B cell (primary cell): ENCODE measurements at regions of chr2 and their contacts with region 1.

Region 1: DNA sequence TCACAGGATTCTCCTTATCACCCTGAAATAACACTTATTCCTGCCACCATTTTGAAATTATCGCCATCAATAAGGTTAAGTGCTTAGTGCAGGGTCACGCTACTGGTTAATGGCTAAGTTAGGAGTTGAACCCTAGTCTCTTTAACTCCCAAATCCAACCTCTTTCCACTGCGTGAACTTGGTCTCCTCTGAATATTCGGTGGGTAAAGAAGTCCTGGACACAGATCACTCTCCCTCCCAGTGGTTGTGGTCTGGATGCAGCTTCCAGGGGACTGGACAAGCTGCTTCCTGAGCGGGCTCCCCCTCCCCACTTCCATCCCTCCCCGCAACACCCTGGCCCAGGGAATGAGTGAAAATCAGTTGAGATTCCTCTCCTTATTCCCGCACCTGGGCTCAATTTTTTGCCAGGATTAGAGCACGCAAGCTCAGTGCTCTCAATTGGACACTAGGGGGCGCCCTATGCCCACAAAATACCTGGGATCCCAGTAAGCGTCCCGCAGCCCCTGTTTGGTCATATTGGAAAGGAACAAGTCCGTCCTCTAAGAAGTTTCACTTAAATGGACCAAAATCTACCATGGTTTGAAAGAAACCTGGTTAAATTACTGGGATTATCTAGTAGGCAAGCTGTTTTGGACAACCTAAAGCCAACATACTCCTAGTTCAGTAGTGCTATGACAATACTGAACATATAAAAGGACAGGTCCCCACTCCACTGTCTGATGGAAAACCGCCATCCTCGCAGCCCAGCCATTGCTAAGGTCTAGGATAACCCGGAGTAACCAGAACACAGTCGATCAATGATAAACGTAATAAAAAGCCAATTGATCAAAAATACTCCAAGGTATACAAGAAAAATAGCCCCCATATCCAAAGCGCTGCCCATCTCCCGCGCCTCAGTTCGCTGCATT is 40.4 kb downstream of the DHRS9 start:
- DNase-seq: peak; percentile 68
- ATAC-seq: peak; percentile 28
- H3K4me3 ChIP-seq: no peak overlapping the region
- H3K4me3 Mint-ChIP-seq: no peak overlapping the region
- H3K27ac ChIP-seq: no peak overlapping the region
- H3K27ac Mint-ChIP-seq: no peak overlapping the region
- H3K4me1 ChIP-seq: peaks cover 20 to 30% of the 10 kb centered on the region in 2 donors
- H3K4me1 Mint-ChIP-seq: peaks cover 31% of the 10 kb centered on the region
- H3K27me3 ChIP-seq: peaks cover 0 to 13% (median 0%) of the 10 kb centered on the region in 4 experiments
- H3K27me3 Mint-ChIP-seq: no peaks in the 10 kb centered on the region
- CTCF ChIP-seq: peak; percentile 77

Region 2: GRCh38 chr2:169095621-169096105 is 14.1 kb before region 1 on chr2:
- CTCF ChIA-PET with region 1: interaction called, 38 read pairs
- POLR2A ChIA-PET with region 1: no interaction called
- intact Hi-C with region 1: no loop called
- DNase-seq: no peak
- ATAC-seq: no peak
- H3K4me3 ChIP-seq: no peak overlapping the region
- H3K4me3 Mint-ChIP-seq: no peak overlapping the region
- H3K27ac ChIP-seq: no peak overlapping the region
- H3K27ac Mint-ChIP-seq: no peak overlapping the region
- H3K4me1 ChIP-seq: peaks cover 18 to 19% of the 10 kb centered on the region in 2 donors
- H3K4me1 Mint-ChIP-seq: peaks cover 28% of the 10 kb centered on the region
- H3K27me3 ChIP-seq: no peaks in the 10 kb centered on the region
- H3K27me3 Mint-ChIP-seq: no peaks in the 10 kb centered on the region
- CTCF ChIP-seq: no peak

Region 3: GRCh38 chr2:169131587-169132512 is 22.1 kb after region 1 on chr2:
- CTCF ChIA-PET with region 1: interaction called, 45 read pairs
- POLR2A ChIA-PET with region 1: no interaction called
- intact Hi-C with region 1: no loop called
- DNase-seq: peak; percentile 63
- ATAC-seq: peak; percentile 81
- H3K4me3 ChIP-seq: no peak overlapping the region
- H3K4me3 Mint-ChIP-seq: no peak overlapping the region
- H3K27ac ChIP-seq: no peak overlapping the region
- H3K27ac Mint-ChIP-seq: no peak overlapping the region
- H3K4me1 ChIP-seq: no peaks in the 10 kb centered on the region
- H3K4me1 Mint-ChIP-seq: peaks cover 1% of the 10 kb centered on the region
- H3K27me3 ChIP-seq: no peaks in the 10 kb centered on the region
- H3K27me3 Mint-ChIP-seq: no peaks in the 10 kb centered on the region
- CTCF ChIP-seq: peak; percentile 98

Region 4: DNA sequence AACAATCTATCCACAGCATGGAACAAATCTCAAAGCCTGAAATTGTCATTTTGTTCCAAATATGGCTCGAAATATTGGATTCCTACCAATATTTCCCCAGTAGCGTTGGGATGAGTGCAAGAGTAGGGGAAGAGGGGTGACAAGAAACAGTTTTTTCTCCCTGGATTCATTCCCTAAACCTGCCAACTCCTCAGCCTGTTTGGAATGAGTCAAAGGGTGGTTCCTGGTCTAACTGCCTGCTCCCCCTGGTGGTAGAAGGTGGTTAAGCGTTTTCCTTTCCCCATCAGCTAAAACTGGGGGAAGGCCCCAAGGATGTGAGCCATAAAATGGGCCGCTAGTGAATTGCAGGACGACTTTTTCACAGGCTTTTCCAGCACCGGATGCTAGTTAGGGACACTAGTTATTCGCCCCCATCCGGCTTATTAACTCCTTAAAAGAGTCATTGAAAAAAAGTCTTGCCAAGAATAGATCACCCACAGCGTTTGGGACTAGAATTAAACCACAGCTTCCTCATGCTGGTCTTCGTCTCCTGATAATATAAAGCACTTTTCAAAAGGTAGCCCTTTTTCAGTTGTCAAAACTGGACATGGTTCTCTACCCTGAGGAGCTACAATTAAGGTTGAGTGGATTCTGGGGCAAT is 32.1 kb after region 1 on chr2:
- CTCF ChIA-PET with region 1: interaction called, 26 read pairs
- POLR2A ChIA-PET with region 1: no interaction called
- intact Hi-C with region 1: loop called (anchors 2 kb)
- DNase-seq: peak; percentile 60
- ATAC-seq: no peak
- H3K4me3 ChIP-seq: no peak overlapping the region
- H3K4me3 Mint-ChIP-seq: no peak overlapping the region
- H3K27ac ChIP-seq: no peak overlapping the region
- H3K27ac Mint-ChIP-seq: no peak overlapping the region
- H3K4me1 ChIP-seq: no peaks in the 10 kb centered on the region
- H3K4me1 Mint-ChIP-seq: no peaks in the 10 kb centered on the region
- H3K27me3 ChIP-seq: no peaks in the 10 kb centered on the region
- H3K27me3 Mint-ChIP-seq: no peaks in the 10 kb centered on the region
- CTCF ChIP-seq: peak; percentile 87